ENCODE measurements at regions of chr14 and their contacts with region 1.

Region 1: DNA sequence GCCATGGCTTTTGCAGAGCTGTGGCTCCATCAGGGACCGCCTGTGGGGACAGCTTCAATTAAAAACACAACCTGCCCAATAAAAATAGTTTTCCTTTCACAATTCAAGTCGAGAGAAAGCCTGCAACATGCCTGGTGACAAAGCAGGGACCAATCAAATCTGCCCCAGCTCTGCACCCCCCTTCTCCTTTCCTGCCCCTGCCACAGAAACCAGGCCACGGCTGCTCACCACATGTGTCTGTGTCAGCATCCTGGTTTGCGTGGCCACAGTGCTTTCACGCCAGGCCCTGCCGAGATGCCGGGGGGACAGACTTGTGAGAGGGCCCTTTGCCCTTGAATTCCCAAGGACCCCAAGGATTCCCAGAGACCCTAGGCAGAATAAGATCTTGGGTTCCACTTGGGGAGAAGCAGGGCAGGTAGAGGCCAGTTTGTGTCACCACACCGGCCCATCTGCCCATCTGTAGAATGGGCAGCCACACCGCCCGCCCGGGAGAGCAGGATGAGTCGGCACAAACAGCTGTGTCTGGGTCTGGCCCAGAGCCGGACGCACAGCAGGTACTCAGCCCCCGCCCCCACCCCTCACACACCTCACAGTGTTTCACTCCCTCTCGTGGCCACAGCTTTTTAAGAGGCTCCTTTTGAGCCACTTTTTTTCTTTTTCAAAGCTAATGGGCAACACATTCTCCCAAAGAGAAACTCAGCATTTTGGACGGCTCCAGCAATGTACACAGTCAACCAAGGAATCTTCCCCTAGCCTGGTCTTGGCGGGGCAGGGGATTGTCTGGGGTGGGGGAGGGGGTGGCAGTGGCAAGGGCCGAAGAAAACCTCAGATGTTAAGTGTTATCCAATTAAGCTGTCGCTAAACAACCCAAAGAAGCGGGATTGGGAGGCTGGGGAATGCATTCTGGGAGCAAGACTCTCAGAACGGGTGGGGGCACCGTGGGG is 41.5 kb downstream of the BCL11B start:
- DNase-seq: peak; percentile 91
- H3K4me3 Mint-ChIP-seq: peak overlapping the region; percentile 74
- H3K27ac Mint-ChIP-seq: peak overlapping the region; percentile 98
- H3K4me1 Mint-ChIP-seq: peaks cover 97% of the 10 kb centered on the region
- H3K27me3 Mint-ChIP-seq: no peaks in the 10 kb centered on the region

Region 2: GRCh38 chr14:99174081-99174851 is 56.2 kb before region 1 on chr14:
- CTCF ChIA-PET with region 1: no interaction called
- POLR2A ChIA-PET with region 1: no interaction called
- DNase-seq: peak; percentile 5
- H3K4me3 Mint-ChIP-seq: no peak overlapping the region
- H3K27ac Mint-ChIP-seq: no peak overlapping the region
- H3K4me1 Mint-ChIP-seq: peaks cover 29% of the 10 kb centered on the region
- H3K27me3 Mint-ChIP-seq: no peaks in the 10 kb centered on the region

Region 3: GRCh38 chr14:99215277-99215676 is 15.2 kb before region 1 on chr14:
- CTCF ChIA-PET with region 1: interaction called, 17 read pairs
- POLR2A ChIA-PET with region 1: interaction called, 7 read pairs
- DNase-seq: no peak
- H3K4me3 Mint-ChIP-seq: peak overlapping the region; percentile 49
- H3K27ac Mint-ChIP-seq: peak overlapping the region; percentile 76
- H3K4me1 Mint-ChIP-seq: peaks cover 94% of the 10 kb centered on the region
- H3K27me3 Mint-ChIP-seq: no peaks in the 10 kb centered on the region

Region 4: GRCh38 chr14:99241325-99242010 is 11.0 kb after region 1 on chr14:
- CTCF ChIA-PET with region 1: interaction called, 28 read pairs
- POLR2A ChIA-PET with region 1: interaction called, 4 read pairs
- DNase-seq: peak; percentile 55
- H3K4me3 Mint-ChIP-seq: peak overlapping the region; percentile 78
- H3K27ac Mint-ChIP-seq: peak overlapping the region; percentile 96
- H3K4me1 Mint-ChIP-seq: peaks cover 87% of the 10 kb centered on the region
- H3K27me3 Mint-ChIP-seq: no peaks in the 10 kb centered on the region

Region 5: DNA sequence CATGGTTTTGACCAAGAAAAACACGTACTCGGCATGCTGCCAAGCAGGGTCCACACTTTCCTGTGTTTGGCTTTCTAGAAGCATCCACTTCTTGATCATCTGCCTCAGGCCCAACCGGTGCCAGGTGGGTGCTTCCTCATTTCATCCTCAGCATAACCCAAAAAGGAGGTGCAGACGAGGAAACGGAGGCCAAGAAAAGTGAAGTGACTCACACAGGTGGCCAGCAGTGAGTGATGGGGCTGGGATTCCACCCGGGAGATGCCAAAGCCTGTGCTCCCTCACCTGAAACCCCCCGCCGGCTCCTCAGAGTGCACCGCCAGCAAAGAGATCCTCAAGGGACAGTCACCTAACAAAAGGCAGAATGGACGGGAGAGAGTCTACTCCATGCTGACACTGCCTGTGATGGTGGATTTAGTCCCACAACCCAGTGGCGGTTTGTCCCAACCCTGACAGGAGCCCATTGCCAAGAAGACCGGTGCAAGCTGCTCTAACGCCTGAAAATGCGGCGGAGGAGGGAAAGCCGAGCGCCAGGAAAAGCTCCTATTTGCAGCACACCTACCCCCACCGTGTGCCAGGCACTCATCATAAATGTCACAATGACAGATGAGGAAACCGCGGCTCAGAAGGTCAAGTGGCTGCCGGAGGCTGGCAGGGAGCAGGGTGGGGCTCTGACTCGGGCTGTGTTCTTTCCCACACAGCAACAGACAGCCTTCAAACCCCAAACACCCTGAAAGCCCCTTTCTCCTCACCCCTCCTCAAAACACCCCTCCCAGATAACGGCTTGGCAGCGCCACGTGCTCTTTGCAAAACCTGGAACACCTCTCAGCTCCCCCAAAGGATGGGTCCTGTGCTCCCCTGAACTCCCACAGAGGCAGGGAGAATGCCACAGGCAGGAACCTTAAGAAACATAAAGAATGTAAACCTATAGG is 22.7 kb after region 1 on chr14:
- CTCF ChIA-PET with region 1: interaction called, 27 read pairs
- POLR2A ChIA-PET with region 1: interaction called, 3 read pairs
- DNase-seq: peak; percentile 68
- H3K4me3 Mint-ChIP-seq: peak overlapping the region; percentile 74
- H3K27ac Mint-ChIP-seq: peak overlapping the region; percentile 94
- H3K4me1 Mint-ChIP-seq: peaks cover 94% of the 10 kb centered on the region
- H3K27me3 Mint-ChIP-seq: no peaks in the 10 kb centered on the region

Region 6: DNA sequence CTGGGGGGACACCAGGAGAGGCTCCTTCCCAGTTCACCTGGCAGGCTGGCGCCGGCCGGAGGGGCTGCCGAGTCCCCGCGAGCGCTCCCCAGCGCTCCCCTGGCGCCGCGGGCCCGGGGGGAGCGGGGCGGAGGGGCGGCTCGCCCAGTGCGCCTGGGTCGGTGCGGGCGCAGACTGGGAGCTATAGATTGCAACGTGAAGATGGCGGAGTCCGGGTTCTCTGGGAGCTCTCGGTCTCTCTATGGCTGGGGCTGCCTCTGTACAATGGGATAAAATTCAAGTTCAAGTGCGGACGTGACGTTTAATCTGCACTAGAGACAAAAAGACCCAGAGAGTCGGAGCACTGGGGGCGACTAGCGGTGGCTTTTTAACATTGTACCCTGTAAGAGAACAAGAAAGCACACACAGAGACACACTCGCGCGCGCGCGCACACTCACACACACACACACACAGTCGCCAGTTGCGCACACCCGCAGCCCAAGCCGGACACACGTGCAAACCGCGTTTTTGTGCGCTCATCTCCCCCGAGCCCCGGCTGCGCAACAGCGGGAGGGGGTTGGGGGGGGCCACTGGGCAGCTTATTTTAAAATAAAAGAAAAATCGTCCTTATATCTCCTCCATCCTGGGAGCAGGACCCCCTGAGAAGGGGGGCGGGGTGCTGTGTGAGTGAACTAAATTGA is 41.6 kb after region 1 on chr14 and contains the start of gene BCL11B:
- CTCF ChIA-PET with region 1: interaction called, 192 read pairs
- POLR2A ChIA-PET with region 1: no interaction called
- DNase-seq: peak; percentile 94
- H3K4me3 Mint-ChIP-seq: peak within 1 kb of the TSS; percentile 87
- H3K27ac Mint-ChIP-seq: peak within 1 kb of the TSS; percentile 99
- H3K4me1 Mint-ChIP-seq: peaks cover 31% of the 10 kb centered on the region
- H3K27me3 Mint-ChIP-seq: peaks cover 15% of the 10 kb centered on the region
- total RNA-seq, gene BCL11B: 115 to 116 TPM

Measured in activated CD4-positive, alpha-beta T cell treated with anti-CD3 and anti-CD28 coated beads, Interleukin-2, amount 10 ng/mL, durations not matched to agents 7 days and 5 days (primary cell).